PC-3 (cell line): ENCODE measurements at regions of chr19 and their contacts with region 1.

Region 1: GRCh38 chr19:11505032-11505503 is 571 bp downstream of the ZNF653 start:
- DNase-seq: peak; percentile 99
- ATAC-seq: peak; percentile 96
- H3K4me3 ChIP-seq: peak overlapping the region; percentile 84
- H3K27ac ChIP-seq: peak overlapping the region; percentile 65
- H3K4me1 ChIP-seq: peaks cover 15% of the 10 kb centered on the region
- H3K27me3 ChIP-seq: no peaks in the 10 kb centered on the region
- CTCF ChIP-seq: no peak

Region 2: GRCh38 chr19:11374433-11375142 is 130.5 kb before region 1 on chr19 and contains the start of gene SWSAP1:
- CTCF ChIA-PET with region 1: no interaction called
- POLR2A ChIA-PET with region 1: no interaction called
- intact Hi-C with region 1: no loop called
- DNase-seq: peak; percentile 100
- ATAC-seq: peak; percentile 85
- H3K4me3 ChIP-seq: peak within 1 kb of the TSS; percentile 68
- H3K27ac ChIP-seq: peak within 1 kb of the TSS; percentile 79
- H3K4me1 ChIP-seq: peaks cover 49% of the 10 kb centered on the region
- H3K27me3 ChIP-seq: no peaks in the 10 kb centered on the region
- CTCF ChIP-seq: no peak
- total RNA-seq, gene SWSAP1: 5.2 and 6.1 TPM in 2 replicates

Region 3: DNA sequence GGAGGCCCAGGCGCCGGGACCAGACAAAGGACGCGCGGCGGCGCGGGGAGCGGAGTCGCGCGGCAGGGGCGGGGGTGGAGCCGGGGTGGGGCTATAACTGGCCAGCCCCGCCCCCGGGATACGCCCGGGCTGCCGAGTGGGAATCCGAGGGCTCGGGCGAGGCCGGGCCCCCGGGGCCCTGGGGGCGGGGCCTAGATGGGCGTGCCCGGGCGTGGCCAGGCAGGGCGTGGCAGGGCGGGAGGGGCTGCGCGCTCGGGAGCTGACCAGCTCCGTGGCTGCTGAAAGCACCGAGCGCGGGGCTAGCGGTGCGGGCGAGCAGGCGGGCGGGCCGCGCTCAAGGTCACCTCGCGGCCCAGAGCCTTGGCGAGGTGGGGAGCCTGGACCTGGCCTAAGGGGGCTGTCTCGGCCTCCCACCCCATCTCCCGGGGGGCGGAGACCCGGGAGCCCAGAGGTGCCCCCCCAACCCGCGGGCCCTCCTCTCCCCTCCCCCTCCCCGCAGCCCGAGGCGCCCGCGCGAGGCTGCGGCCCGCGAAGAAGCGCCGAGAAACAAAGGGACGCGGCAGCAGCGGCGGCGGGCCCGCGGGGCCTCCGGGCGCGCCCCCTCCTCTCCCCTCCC is 25.5 kb before region 1 on chr19:
- CTCF ChIA-PET with region 1: no interaction called
- POLR2A ChIA-PET with region 1: no interaction called
- intact Hi-C with region 1: no loop called
- DNase-seq: no peak
- ATAC-seq: no peak
- H3K4me3 ChIP-seq: no peak overlapping the region
- H3K27ac ChIP-seq: no peak overlapping the region
- H3K4me1 ChIP-seq: peaks cover 7% of the 10 kb centered on the region; the same call in 1 of the 2 replicates
- H3K27me3 ChIP-seq: peaks cover 14% of the 10 kb centered on the region; the same call in 1 of the 2 replicates
- CTCF ChIP-seq: no peak

Region 4: GRCh38 chr19:11528551-11529341 is 23.7 kb after region 1 on chr19 and contains the start of gene ECSIT:
- CTCF ChIA-PET with region 1: no interaction called
- POLR2A ChIA-PET with region 1: no interaction called
- intact Hi-C with region 1: loop called (anchors 2 kb)
- DNase-seq: peak; percentile 99
- ATAC-seq: peak; percentile 96
- H3K4me3 ChIP-seq: peak within 1 kb of the TSS; percentile 90
- H3K27ac ChIP-seq: peak within 1 kb of the TSS; percentile 81
- H3K4me1 ChIP-seq: peaks cover 25% of the 10 kb centered on the region
- H3K27me3 ChIP-seq: no peaks in the 10 kb centered on the region
- CTCF ChIP-seq: no peak
- total RNA-seq, gene ECSIT: 126 and 156 TPM in 2 replicates